Caco-2 (cell line): ENCODE measurements at regions of chr10 and their contacts with region 1.

Region 1: DNA sequence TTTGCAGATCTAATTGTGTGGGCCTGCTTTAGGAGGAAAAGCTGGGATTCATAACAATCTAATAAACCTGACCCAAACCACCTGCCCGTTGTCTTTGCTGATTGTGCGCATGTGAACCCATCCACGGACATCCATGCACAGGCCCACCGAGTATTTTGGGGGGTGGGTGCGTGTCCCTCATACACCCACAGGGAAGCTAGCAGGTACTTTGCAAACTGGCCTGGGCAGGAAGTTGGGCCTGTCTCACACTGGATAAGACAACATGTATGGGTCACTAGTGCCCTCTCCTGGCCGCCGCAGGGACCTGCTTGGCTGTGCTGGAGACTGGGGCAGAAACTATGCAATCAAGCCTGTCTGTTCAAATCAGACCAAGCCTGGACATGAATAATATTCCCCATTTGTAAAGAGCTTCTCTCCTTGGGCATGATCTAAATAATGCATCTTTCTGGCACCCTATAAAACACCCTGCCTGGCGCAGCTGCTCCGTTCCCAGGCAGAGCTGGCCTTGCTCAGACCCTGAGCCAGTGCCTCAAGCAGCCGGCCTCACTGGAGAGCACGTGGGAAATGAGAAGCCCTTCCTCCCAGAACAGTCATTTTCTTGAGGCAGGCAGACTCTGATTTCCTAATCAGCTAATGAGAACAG is 15.8 kb downstream of the ECHDC3 start:
- DNase-seq: peak; percentile 89 to 94
- H3K4me3 ChIP-seq: no peak overlapping the region
- H3K4me3 Mint-ChIP-seq: no peak overlapping the region
- H3K27ac Mint-ChIP-seq: peak overlapping the region; percentile 15
- H3K4me1 ChIP-seq: peaks cover 6% of the 10 kb centered on the region
- H3K4me1 Mint-ChIP-seq: peaks cover 6% of the 10 kb centered on the region
- H3K27me3 ChIP-seq: no peaks in the 10 kb centered on the region
- H3K27me3 Mint-ChIP-seq: no peaks in the 10 kb centered on the region
- CTCF ChIP-seq: peak; percentile 95 to 99

Region 2: DNA sequence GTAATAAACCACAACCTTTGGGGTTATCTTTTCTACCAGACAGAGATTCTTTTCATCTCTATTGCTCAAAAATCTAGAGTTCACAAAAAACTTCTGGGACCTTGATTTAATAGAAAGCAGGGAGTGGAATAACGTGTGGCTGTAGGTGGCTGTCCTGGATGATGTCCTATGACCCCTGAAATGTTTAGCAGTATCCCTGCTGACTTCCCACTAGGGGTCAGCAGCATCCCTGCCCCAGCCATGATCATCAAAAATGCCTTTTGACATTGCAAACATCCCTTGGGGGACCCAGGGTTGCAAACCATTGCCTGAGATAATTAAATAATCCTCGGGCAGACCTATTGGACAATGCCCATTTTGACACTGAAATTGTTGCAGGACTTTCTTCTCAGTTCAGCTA is 323.6 kb before region 1 on chr10:
- CTCF ChIA-PET with region 1: interaction called, 8 read pairs
- POLR2A ChIA-PET with region 1: no interaction called
- intact Hi-C with region 1: loop called (anchors 1 kb)
- DNase-seq: peak in 1 of 2 experiments; percentile 49
- H3K4me3 ChIP-seq: no peak overlapping the region
- H3K4me3 Mint-ChIP-seq: no peak overlapping the region
- H3K27ac Mint-ChIP-seq: no peak overlapping the region
- H3K4me1 ChIP-seq: no peaks in the 10 kb centered on the region
- H3K4me1 Mint-ChIP-seq: no peaks in the 10 kb centered on the region
- H3K27me3 ChIP-seq: no peaks in the 10 kb centered on the region
- H3K27me3 Mint-ChIP-seq: peaks cover 10% of the 10 kb centered on the region
- CTCF ChIP-seq: peak; percentile 65 to 69

Region 3: DNA sequence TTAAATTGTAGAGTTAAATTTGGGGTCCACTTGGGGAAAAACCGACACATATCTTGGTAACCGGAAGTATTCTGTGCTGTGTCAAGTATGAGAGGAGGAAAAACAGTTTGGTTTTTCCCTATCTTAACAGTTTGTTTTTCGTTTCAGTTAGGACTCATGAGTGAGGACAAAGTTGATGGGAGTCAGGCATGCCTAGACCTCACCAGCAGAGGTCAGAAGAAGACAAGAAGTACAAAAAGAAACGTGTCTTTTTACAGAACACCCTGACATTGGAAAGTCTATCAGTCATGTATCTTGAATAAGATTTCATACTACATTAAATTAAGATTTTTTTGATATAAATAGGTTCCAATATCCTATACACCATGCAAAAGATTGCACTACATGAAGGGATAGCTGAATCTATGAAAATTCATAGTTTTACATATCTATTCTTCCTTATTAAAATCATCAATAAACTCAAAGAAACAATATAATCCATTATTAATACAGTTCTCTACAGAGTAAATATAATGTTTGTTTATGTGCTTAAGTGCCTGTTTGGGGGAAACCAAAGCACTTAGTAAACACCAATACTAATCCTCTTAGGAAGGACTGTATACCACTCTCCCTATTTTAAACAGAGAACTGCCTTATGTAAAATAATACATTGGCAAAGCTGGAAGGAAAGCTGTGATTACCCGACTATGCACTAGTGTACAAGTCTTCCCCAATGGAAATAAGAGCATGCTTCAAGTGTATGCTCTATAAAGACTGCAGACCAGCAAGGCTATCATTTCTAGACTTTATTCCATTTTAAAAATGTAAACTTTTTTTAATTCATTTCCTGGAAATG is 242.1 kb before region 1 on chr10:
- CTCF ChIA-PET with region 1: interaction called, 20 read pairs
- POLR2A ChIA-PET with region 1: no interaction called
- intact Hi-C with region 1: loop called (anchors 1 kb)
- DNase-seq: peak; percentile 57 to 74
- H3K4me3 ChIP-seq: no peak overlapping the region
- H3K4me3 Mint-ChIP-seq: no peak overlapping the region
- H3K27ac Mint-ChIP-seq: no peak overlapping the region
- H3K4me1 ChIP-seq: no peaks in the 10 kb centered on the region
- H3K4me1 Mint-ChIP-seq: no peaks in the 10 kb centered on the region
- H3K27me3 ChIP-seq: no peaks in the 10 kb centered on the region
- H3K27me3 Mint-ChIP-seq: no peaks in the 10 kb centered on the region
- CTCF ChIP-seq: peak; percentile 79 to 97

Region 4: DNA sequence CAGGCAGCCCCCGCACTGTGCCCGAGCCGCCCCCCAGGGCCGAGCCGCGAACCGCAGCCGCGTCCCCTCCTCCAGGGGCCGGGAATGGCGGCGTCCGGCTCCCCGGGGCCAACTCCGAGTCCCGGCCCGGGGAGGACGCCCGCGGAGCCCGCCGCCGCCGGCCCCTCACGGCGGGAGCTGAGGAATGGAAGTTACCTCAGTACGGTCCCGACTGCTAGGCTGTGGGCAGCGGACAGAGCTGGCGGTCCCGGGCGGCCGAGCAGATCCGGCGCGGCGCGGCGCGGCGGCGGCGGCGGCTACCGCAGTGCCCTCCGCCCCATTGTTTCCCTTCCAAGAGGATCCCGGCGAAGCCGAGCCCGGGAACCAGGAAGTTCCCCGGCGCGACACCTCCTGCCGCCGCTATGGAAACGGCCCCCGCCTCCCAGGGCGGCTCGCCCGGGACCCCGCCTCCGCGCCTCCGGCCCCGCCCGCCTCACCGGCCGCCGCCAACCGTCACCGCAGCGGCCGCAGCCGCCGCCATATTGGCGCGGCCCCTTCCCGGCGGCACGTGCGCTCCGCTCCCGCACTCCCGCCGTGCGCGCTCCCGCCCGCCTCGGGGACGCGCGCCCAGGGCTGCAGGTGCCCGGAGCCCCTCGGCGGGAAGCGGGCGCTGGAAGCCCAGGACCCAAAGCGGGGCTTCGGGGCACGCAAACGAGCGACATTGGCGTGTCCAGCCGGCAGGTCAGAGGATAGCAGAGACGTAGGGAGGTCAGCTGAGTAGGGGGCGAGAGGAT is 146.5 kb before region 1 on chr10 and contains the start of gene USP6NL:
- CTCF ChIA-PET with region 1: interaction called, 8 read pairs
- POLR2A ChIA-PET with region 1: interaction called, 3 read pairs
- intact Hi-C with region 1: loop called (anchors 1 kb)
- DNase-seq: peak; percentile 95 to 99
- H3K4me3 ChIP-seq: peak within 1 kb of the TSS; percentile 94
- H3K4me3 Mint-ChIP-seq: peak within 1 kb of the TSS; percentile 82
- H3K27ac Mint-ChIP-seq: peak within 1 kb of the TSS; percentile 81
- H3K4me1 ChIP-seq: peaks cover 46% of the 10 kb centered on the region
- H3K4me1 Mint-ChIP-seq: peaks cover 25% of the 10 kb centered on the region
- H3K27me3 ChIP-seq: no peaks in the 10 kb centered on the region
- H3K27me3 Mint-ChIP-seq: no peaks in the 10 kb centered on the region
- CTCF ChIP-seq: no peak
- total RNA-seq, gene USP6NL: 34.1 and 35.6 TPM in 2 replicates

Region 5: GRCh38 chr10:11742005-11742778 is 15.8 kb before region 1 on chr10 and contains the start of gene ECHDC3:
- CTCF ChIA-PET with region 1: no interaction called
- POLR2A ChIA-PET with region 1: no interaction called
- intact Hi-C with region 1: loop called (anchors 1 kb)
- DNase-seq: peak; percentile 78 to 79
- H3K4me3 ChIP-seq: peak within 1 kb of the TSS; percentile 87
- H3K4me3 Mint-ChIP-seq: peak within 1 kb of the TSS; percentile 71
- H3K27ac Mint-ChIP-seq: peak within 1 kb of the TSS; percentile 58
- H3K4me1 ChIP-seq: peaks cover 6% of the 10 kb centered on the region
- H3K4me1 Mint-ChIP-seq: peaks cover 22% of the 10 kb centered on the region
- H3K27me3 ChIP-seq: no peaks in the 10 kb centered on the region
- H3K27me3 Mint-ChIP-seq: no peaks in the 10 kb centered on the region
- CTCF ChIP-seq: no peak
- total RNA-seq, gene ECHDC3: 27.9 and 30.1 TPM in 2 replicates

Region 6: DNA sequence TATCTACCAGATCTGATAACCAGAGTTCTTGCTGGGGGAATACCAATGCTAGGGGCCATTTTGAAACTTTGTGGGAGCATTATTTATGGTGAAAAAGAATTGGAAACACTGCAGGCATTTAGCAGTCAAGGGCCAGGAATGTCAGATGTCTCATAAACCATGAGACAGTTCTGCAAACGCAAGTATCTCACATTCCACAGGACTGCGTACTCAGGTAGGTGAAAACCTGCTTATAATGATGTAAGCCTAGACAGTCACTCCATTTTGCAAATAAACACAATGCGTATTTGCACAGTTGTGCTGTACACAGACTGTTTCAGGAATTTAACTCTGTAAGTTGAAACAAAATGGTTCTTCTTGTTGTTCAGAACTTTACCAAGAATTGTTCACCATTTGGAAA is 18.2 kb after region 1 on chr10:
- CTCF ChIA-PET with region 1: no interaction called
- POLR2A ChIA-PET with region 1: no interaction called
- intact Hi-C with region 1: no loop called
- DNase-seq: peak; percentile 69 to 74
- H3K4me3 ChIP-seq: no peak overlapping the region
- H3K4me3 Mint-ChIP-seq: peak overlapping the region; percentile 3
- H3K27ac Mint-ChIP-seq: peak overlapping the region; percentile 61
- H3K4me1 ChIP-seq: peaks cover 18% of the 10 kb centered on the region
- H3K4me1 Mint-ChIP-seq: peaks cover 15% of the 10 kb centered on the region
- H3K27me3 ChIP-seq: no peaks in the 10 kb centered on the region
- H3K27me3 Mint-ChIP-seq: no peaks in the 10 kb centered on the region
- CTCF ChIP-seq: no peak

Region 7: GRCh38 chr10:11898372-11899066 is 140.6 kb after region 1 on chr10:
- CTCF ChIA-PET with region 1: no interaction called
- POLR2A ChIA-PET with region 1: no interaction called
- intact Hi-C with region 1: no loop called
- DNase-seq: peak; percentile 78 to 89
- H3K4me3 ChIP-seq: no peak overlapping the region
- H3K4me3 Mint-ChIP-seq: no peak overlapping the region
- H3K27ac Mint-ChIP-seq: peak overlapping the region; percentile 86
- H3K4me1 ChIP-seq: peaks cover 25% of the 10 kb centered on the region
- H3K4me1 Mint-ChIP-seq: peaks cover 39% of the 10 kb centered on the region
- H3K27me3 ChIP-seq: no peaks in the 10 kb centered on the region
- H3K27me3 Mint-ChIP-seq: no peaks in the 10 kb centered on the region
- CTCF ChIP-seq: no peak